Left colon (tissue), 2 donors: ENCODE measurements at regions of chr18 and their contacts with region 1.

Region 1: GRCh38 chr18:4106407-4107033 is 348.6 kb downstream of the DLGAP1 start:
- DNase-seq: peak in 1 of 2 donors; percentile 63
- ATAC-seq: peak; percentile 51

Region 2: GRCh38 chr18:4016491-4016984 is 90.0 kb before region 1 on chr18:
- intact Hi-C with region 1: no loop called
- DNase-seq: no peak
- ATAC-seq: no peak

Region 3: DNA sequence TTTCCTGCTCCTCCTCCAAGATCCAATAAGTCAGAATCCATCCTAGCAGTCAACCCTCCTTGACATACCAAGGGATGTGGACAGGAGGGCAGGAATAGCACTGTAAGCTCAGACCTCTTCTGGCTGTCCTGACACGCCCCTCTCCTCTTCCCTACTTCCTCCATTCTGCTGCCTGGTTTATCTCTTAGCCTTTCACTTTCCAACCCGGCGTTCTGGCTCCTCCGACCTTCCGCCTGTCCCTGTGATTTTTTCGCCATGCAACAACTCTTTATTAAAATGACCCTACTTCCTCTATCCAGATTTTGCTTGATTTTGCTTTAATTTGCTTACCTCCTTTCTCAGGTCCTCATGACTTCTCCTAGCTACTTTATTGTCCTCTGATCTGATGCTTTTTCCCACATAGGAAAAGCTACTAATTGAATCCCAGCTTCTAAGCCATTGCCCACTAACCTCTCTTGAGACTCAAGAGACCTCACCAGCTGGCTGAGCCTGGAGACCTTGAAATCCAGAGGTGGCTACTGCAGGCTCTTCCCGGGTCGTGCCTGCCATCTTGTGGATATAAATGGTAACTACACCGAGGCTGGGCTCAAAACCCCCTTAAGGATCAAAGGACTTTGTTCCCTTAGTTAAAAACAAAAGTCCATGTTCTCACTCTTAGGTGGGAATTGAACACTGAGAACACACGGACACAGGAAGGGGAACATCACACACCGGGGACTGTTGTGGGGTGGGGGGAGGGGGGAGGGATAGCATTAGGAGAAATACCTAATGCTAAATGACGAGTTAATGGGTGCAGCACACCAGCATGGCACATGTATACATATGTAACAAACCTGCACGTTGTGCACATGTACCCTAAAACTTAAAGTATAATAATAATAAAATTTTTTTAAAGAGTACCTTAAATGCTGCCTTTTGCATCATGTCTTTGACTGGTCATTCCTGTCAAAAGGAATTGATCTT is 951.1 kb after region 1 on chr18:
- intact Hi-C with region 1: loop called in 1 of 2 experiments (anchors 10 kb)
- DNase-seq: peak in 1 of 2 donors; percentile 41
- ATAC-seq: peak; percentile 77